Activated CD4-positive, alpha-beta T cell treated with anti-CD3 and anti-CD28 coated beads, Interleukin-2, amount 10 ng/mL, durations not matched to agents 24 days and 14 days (primary cell): ENCODE measurements at regions of chr1 and their contacts with region 1.

Region 1: DNA sequence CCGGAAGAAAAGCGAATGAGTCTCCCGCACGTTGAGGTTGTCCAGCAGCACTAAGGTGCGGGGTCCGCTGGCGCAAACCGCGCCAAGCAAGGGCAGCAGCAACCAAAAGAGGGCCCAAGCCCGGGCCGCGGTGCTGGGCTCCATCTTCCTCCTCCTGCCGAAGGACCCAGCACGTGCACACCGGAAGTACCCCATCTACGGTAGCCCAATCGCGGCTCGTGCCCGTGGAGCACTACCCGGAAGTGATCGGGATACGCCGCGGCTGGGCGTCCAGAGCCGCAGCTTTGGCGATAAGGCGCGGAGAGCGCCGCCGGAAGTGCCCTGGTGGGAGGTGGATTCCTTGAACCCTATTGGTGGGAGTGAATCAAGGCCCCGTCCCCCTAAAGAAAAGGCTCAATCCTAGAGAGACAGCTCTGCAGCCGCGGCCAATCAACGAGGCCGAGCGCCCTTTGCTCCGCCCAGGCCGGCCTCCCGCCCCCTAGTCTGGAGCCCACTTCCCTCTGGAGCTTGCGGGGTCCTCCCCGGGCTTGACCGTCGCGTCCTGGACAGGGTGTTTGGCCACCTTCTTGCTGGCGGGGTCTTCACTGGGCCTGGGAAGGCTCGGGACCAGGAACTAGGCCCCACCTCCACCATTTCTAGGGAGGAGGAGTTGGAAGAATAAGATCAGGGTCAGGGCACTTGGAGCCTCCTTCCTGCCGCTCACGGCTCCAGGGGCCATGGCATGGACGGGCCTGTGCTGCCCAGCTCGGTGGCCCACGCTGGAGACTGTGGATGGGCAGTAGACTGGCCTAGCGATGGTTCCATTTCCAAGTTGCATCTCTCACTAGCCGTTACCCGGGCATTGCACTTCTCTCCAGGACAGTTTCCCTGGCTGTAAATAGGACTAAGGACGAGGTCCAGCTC is at the start of gene DDOST:
- DNase-seq: peak; percentile 98
- H3K4me3 Mint-ChIP-seq: peak within 1 kb of the TSS; percentile 99
- H3K27ac Mint-ChIP-seq: peak within 1 kb of the TSS; percentile 98
- H3K4me1 Mint-ChIP-seq: peaks cover 37% of the 10 kb centered on the region
- H3K27me3 Mint-ChIP-seq: no peaks in the 10 kb centered on the region
- total RNA-seq, gene DDOST: 170 and 177 TPM in 2 replicates

Region 2: GRCh38 chr1:20633190-20634064 is 28.0 kb before region 1 on chr1 and contains the start of gene PINK1:
- intact Hi-C with region 1: loop called (anchors 1 kb)
- DNase-seq: peak; percentile 98
- H3K4me3 Mint-ChIP-seq: peak within 1 kb of the TSS; percentile 85
- H3K27ac Mint-ChIP-seq: peak within 1 kb of the TSS; percentile 60
- H3K4me1 Mint-ChIP-seq: peaks cover 7% of the 10 kb centered on the region
- H3K27me3 Mint-ChIP-seq: peaks cover 10% of the 10 kb centered on the region
- total RNA-seq, gene PINK1: 2.0 and 2.4 TPM in 2 replicates

Region 3: GRCh38 chr1:20732588-20733360 is 71.3 kb after region 1 on chr1 and contains the start of gene SH2D5:
- intact Hi-C with region 1: loop called (anchors 2 kb)
- DNase-seq: peak; percentile 90
- H3K4me3 Mint-ChIP-seq: peak within 1 kb of the TSS; percentile 88
- H3K27ac Mint-ChIP-seq: peak within 1 kb of the TSS; percentile 70
- H3K4me1 Mint-ChIP-seq: peaks cover 14% of the 10 kb centered on the region
- H3K27me3 Mint-ChIP-seq: peaks cover 37% of the 10 kb centered on the region
- total RNA-seq, gene SH2D5: 0.23 and 0.24 TPM in 2 replicates